Activated naive CD4-positive, alpha-beta T cell treated with anti-CD3 and anti-CD28 coated beads for 36 hours (primary cell): ENCODE measurements at regions of chr1 and their contacts with region 1.

Region 1: DNA sequence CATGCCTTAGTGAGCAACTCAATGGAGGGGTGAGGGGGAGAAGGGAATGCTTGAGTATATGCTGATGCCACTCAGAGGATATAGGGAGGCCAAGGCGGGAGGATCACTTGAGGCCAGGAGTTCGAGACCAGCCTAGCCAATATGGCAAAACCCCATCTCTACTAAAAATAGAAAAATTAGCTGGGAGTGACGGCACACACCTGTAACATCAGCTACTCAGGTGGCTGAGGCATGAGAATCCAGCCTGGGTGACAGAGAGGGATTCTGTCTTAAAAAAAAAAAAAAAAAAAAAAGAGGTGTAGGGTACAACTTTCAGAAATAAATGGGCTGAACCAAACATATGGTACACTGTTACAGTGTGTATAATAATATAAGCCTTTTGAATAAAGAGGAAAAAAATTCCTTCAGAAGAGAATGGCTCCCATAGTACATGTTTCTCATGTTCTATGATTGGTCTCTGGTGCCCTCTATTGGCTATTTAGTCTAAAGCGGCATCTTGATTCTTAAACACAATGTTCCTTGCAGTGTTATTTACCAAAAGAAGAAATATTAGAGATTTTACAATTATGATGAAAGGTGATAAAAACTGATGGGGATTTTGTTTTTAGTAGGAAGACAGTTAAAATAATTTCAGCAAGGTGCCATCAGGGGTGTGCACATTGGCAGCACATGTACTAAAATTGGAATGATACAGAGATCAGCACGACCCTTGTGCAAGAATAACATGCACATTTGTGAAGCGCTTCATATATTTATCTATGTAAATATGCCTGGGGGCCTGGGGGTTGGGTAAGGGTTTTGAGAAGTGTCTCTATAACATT is 109.8 kb downstream of the PATJ start:
- DNase-seq: peak; percentile 11
- H3K4me3 Mint-ChIP-seq: no peak overlapping the region
- H3K27ac Mint-ChIP-seq: no peak overlapping the region
- H3K4me1 Mint-ChIP-seq: no peaks in the 10 kb centered on the region
- H3K27me3 Mint-ChIP-seq: no peaks in the 10 kb centered on the region

Region 2: DNA sequence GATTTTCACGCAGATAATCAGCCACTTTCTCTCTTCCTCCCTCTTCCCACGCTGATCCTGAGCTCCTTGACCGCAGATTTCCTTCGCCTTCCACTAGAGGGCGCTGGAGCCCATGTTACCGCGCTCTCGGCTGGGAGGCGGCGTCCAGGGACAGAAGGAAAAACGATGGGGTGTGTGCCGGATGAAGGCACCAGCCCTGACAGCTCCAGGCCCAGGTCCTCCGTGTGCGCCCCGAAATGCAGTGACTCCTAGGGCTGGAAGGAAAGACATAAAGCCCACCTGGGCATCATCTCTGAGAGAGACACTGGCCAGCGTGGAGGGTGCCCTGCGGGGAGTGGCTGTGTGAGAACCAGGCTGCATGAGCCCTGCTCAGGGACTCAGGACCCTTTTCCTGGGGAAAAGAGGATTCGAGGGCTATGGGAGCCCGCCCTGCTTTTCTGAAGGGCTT is 1880.6 kb before region 1 on chr1:
- CTCF ChIA-PET with region 1: no interaction called
- intact Hi-C with region 1: loop called (anchors 5 kb)
- DNase-seq: peak; percentile 60
- H3K4me3 Mint-ChIP-seq: no peak overlapping the region
- H3K27ac Mint-ChIP-seq: no peak overlapping the region
- H3K4me1 Mint-ChIP-seq: peaks cover 3% of the 10 kb centered on the region
- H3K27me3 Mint-ChIP-seq: peaks cover 22% of the 10 kb centered on the region

Region 3: DNA sequence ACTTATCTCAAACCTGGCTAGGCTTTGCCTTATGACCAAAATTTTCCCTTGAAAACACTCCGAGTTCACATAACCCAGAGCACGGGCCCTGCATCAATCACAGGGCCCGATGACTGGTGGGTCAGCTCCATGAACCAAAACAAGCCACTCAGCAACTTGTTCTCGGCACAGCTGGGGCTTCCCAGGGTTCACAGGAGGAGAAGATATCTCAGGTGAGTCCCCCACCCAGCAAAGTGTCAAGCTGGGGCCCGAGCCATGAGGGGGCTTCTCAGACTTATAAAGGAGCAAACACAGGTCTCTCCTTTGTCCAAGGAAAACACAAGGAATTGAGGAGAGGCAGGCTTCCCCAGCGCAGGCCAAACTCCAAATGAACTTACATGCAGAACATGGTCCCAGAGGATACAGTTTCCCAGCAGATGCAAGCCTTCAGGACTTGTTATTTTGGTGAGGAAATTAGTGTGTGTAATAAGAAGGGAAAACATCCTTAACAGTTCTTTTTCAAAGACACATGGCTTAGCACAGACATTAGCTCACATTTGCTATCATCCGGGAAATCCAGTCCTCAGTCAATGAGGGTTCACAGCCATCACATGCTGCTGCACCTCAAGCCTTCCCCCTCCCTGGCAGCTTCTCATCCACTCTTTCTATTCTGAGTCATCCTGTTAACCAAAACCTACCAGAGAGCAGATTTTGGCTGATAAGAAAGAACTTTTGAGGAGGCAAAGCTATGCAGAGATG is 867.8 kb before region 1 on chr1:
- CTCF ChIA-PET with region 1: no interaction called
- intact Hi-C with region 1: loop called (anchors 5 kb)
- DNase-seq: no peak
- H3K4me3 Mint-ChIP-seq: no peak overlapping the region
- H3K27ac Mint-ChIP-seq: no peak overlapping the region
- H3K4me1 Mint-ChIP-seq: no peaks in the 10 kb centered on the region
- H3K27me3 Mint-ChIP-seq: no peaks in the 10 kb centered on the region

Region 4: GRCh38 chr1:61343734-61344420 is 508.2 kb before region 1 on chr1:
- CTCF ChIA-PET with region 1: no interaction called
- intact Hi-C with region 1: loop called (anchors 10 kb)
- DNase-seq: no peak
- H3K4me3 Mint-ChIP-seq: no peak overlapping the region
- H3K27ac Mint-ChIP-seq: no peak overlapping the region
- H3K4me1 Mint-ChIP-seq: no peaks in the 10 kb centered on the region
- H3K27me3 Mint-ChIP-seq: peaks cover 2% of the 10 kb centered on the region

Region 5: GRCh38 chr1:61588736-61589672 is 263.1 kb before region 1 on chr1:
- CTCF ChIA-PET with region 1: interaction called, 7 read pairs
- intact Hi-C with region 1: loop called (anchors 1 kb)
- DNase-seq: peak; percentile 79
- H3K4me3 Mint-ChIP-seq: no peak overlapping the region
- H3K27ac Mint-ChIP-seq: no peak overlapping the region
- H3K4me1 Mint-ChIP-seq: no peaks in the 10 kb centered on the region
- H3K27me3 Mint-ChIP-seq: peaks cover 4% of the 10 kb centered on the region

Region 6: GRCh38 chr1:61724813-61725694 is 127.0 kb before region 1 on chr1 and contains the start of gene TM2D1:
- CTCF ChIA-PET with region 1: no interaction called
- intact Hi-C with region 1: loop called (anchors 1 kb)
- DNase-seq: peak; percentile 91
- H3K4me3 Mint-ChIP-seq: peak within 1 kb of the TSS; percentile 96
- H3K27ac Mint-ChIP-seq: peak within 1 kb of the TSS; percentile 99
- H3K4me1 Mint-ChIP-seq: peaks cover 20% of the 10 kb centered on the region
- H3K27me3 Mint-ChIP-seq: no peaks in the 10 kb centered on the region
- total RNA-seq, gene TM2D1: 28.2 to 30.9 TPM

Region 7: GRCh38 chr1:61808968-61809367 is 43.1 kb before region 1 on chr1:
- CTCF ChIA-PET with region 1: no interaction called
- intact Hi-C with region 1: no loop called
- DNase-seq: no peak
- H3K4me3 Mint-ChIP-seq: no peak overlapping the region
- H3K27ac Mint-ChIP-seq: no peak overlapping the region
- H3K4me1 Mint-ChIP-seq: no peaks in the 10 kb centered on the region
- H3K27me3 Mint-ChIP-seq: no peaks in the 10 kb centered on the region